Lower leg skin (tissue), 4 donors: ENCODE measurements at regions of chr3 and their contacts with region 1.

Region 1: GRCh38 chr3:126146525-126147146 is 33.8 kb downstream of the ALDH1L1 start:
- DNase-seq: peak in 1 of 2 donors; percentile 80
- H3K4me3 ChIP-seq: no peak overlapping the region
- CTCF ChIP-seq: no peak
- POLR2A ChIP-seq: no peak

Region 2: DNA sequence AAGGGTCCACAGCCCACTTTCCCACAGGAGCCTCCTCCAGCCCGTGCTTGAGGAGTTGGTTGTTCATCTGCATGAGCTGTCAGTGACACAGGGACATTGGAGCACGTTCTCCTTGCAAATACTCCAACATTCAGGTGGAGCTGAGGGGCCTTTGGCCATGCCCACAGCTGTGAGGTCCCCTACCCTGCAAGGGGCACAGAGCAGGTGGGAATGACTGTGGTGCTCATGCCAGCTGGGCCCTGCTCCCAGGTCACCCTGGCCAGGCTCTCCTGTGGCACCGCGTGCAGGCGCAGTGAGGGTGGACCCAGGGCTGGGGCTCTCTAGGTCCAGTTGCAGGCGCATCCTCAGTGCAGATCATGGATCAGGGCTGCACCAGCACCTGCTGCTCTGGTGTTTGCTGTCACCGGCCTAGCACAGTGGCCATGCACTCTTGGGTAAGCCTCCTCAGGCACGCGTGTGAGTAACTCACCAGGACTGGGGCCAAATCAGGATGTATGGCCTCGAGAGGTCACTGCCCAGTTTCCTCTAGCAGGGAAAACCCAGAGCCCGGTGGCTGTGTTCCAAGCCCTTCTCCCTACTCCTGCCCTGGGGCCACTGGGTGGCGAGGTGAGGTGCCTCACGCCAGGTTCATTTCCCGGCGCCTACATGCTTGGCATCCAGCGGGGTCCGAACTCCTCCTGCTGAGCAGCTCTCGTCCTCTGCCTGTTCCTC is 17.3 kb before region 1 on chr3:
- intact Hi-C with region 1: no loop called
- DNase-seq: peak; percentile 27 to 84
- H3K4me3 ChIP-seq: no peak overlapping the region
- CTCF ChIP-seq: no peak
- POLR2A ChIP-seq: no peak

Region 3: DNA sequence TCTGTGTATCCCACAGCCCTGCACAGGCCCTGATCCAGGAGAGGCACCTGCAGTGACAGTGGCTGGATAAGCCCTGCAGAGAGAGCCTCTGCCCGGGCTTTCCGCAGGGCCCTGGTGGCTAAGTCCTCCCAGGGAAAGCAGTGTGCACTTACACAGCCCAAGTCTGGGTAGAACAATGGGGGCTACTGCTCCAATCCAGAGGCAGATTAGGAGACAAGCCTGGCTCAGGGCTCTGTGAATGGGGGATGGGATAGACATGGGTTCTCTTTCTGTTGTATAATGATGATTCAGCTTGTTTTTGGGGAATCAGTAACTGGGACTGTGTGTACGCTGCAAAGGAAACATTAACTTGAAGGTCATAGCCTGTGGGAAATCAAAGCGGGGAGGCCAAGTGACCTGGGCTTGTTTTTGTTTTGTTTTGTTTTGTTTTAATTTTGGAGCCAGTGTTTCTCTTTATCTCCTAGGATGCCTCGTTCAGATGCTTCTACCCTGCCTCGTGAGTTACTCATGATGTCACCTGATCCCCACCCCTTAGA is 37.9 kb after region 1 on chr3:
- intact Hi-C with region 1: loop called (anchors 1 kb)
- DNase-seq: no peak
- H3K4me3 ChIP-seq: no peak overlapping the region
- CTCF ChIP-seq: no peak
- POLR2A ChIP-seq: no peak